ENCODE measurements at regions of chr4 and their contacts with region 1.

Region 1: GRCh38 chr4:114694770-114695169 is 96.2 kb downstream of the UGT8 start:
- DNase-seq: no peak
- ATAC-seq: no peak
- H3K4me3 ChIP-seq: no peak overlapping the region
- H3K27ac ChIP-seq: no peak overlapping the region
- H3K4me1 ChIP-seq: no peaks in the 10 kb centered on the region
- H3K27me3 ChIP-seq: no peaks in the 10 kb centered on the region
- CTCF ChIP-seq: peak; percentile 57

Region 2: DNA sequence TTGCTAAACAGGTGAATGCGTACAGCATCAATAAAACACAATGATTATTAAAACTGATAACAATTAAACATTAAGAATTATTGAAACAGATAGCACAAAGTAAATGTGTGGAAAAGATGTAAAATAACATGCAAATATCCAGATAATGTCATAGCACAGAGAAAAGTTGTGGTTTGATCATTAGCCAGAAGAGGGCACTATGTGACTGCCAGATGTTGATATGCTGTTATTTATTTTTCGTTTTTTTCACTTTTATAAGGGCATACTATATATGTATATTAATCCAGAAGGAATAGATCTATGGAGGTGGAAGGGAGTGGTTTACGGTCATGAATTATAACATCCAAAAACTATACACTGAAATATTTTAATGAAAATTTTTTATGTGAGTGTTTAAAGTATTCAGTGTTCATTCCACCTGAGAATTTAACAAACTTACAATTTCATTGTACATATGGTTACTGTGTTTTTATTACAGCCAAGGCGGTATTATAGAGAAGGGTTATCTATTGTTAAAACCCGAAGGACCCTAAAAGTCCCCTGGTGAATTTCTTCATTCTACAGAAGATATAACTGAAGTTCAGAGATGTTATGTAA is 308.0 kb before region 1 on chr4:
- intact Hi-C with region 1: loop called in 1 of 2 experiments (anchors 10 kb)
- DNase-seq: no peak
- ATAC-seq: no peak
- H3K4me3 ChIP-seq: no peak overlapping the region
- H3K27ac ChIP-seq: no peak overlapping the region
- H3K4me1 ChIP-seq: no peaks in the 10 kb centered on the region
- H3K27me3 ChIP-seq: no peaks in the 10 kb centered on the region
- CTCF ChIP-seq: peak; percentile 31

Region 3: GRCh38 chr4:114598191-114599121 is 96.3 kb before region 1 on chr4 and contains the start of gene UGT8:
- intact Hi-C with region 1: no loop called
- DNase-seq: peak; percentile 17 to 51
- ATAC-seq: peak; percentile 30 to 51 (median 44)
- H3K4me3 ChIP-seq: peak within 1 kb of the TSS; percentile 62
- H3K27ac ChIP-seq: no peak within 1 kb of the TSS
- H3K4me1 ChIP-seq: no peaks in the 10 kb centered on the region
- H3K27me3 ChIP-seq: peaks cover 0 to 47% (median 0%) of the 10 kb centered on the region in 3 donors
- CTCF ChIP-seq: no peak
- total RNA-seq, gene UGT8: 0.08 TPM in 1 of 4 donors, not detected in the others

Measured in psoas muscle (tissue), 8 donors.